ENCODE measurements at regions of chr5 and their contacts with region 1.

Region 1: GRCh38 chr5:40716000-40716399 is 36.3 kb downstream of the PTGER4 start:
- DNase-seq: no peak
- ATAC-seq: peak; percentile 57
- H3K4me3 ChIP-seq: no peak overlapping the region
- H3K27ac ChIP-seq: no peak overlapping the region
- H3K4me1 ChIP-seq: no peaks in the 10 kb centered on the region
- H3K27me3 ChIP-seq: no peaks in the 10 kb centered on the region
- CTCF ChIP-seq: peak in 2 of 3 experiments; percentile 24 to 27; a peak in 1 of 6 replicates
- POLR2A ChIP-seq: no peak
- RAD21 ChIP-seq: no peak

Region 2: GRCh38 chr5:40774623-40775022 is 58.6 kb after region 1 on chr5:
- CTCF ChIA-PET with region 1: no interaction called
- POLR2A ChIA-PET with region 1: no interaction called
- RAD21 ChIA-PET with region 1: no interaction called
- intact Hi-C with region 1: loop called (anchors 10 kb)
- DNase-seq: no peak
- ATAC-seq: no peak
- H3K4me3 ChIP-seq: no peak overlapping the region
- H3K27ac ChIP-seq: no peak overlapping the region
- H3K4me1 ChIP-seq: no peaks in the 10 kb centered on the region
- H3K27me3 ChIP-seq: no peaks in the 10 kb centered on the region
- CTCF ChIP-seq: no peak
- POLR2A ChIP-seq: no peak
- RAD21 ChIP-seq: no peak

Measured in HCT116 (cell line).